Activated CD8-positive, alpha-beta T cell treated with anti-CD3 and anti-CD28 coated beads, Interleukin-2, amount 10 ng/mL, durations not matched to agents 7 days and 5 days (primary cell): ENCODE measurements at regions of chr7 and their contacts with region 1.

Region 1: GRCh38 chr7:116929914-116930913 is 23.1 kb upstream of the ST7 start:
- DNase-seq: peak; percentile 81
- ATAC-seq: peak; percentile 91
- H3K4me3 Mint-ChIP-seq: no peak overlapping the region
- H3K27ac Mint-ChIP-seq: no peak overlapping the region
- H3K4me1 Mint-ChIP-seq: peaks cover 7% of the 10 kb centered on the region
- H3K27me3 Mint-ChIP-seq: peaks cover 24% of the 10 kb centered on the region

Region 2: GRCh38 chr7:116786791-116787443 is 143.3 kb before region 1 on chr7:
- CTCF ChIA-PET with region 1: no interaction called
- POLR2A ChIA-PET with region 1: no interaction called
- DNase-seq: peak; percentile 21
- ATAC-seq: no peak
- H3K4me3 Mint-ChIP-seq: no peak overlapping the region
- H3K27ac Mint-ChIP-seq: no peak overlapping the region
- H3K4me1 Mint-ChIP-seq: no peaks in the 10 kb centered on the region
- H3K27me3 Mint-ChIP-seq: peaks cover 11% of the 10 kb centered on the region

Region 3: GRCh38 chr7:116918704-116919103 is 11.5 kb before region 1 on chr7:
- CTCF ChIA-PET with region 1: interaction called, 12 read pairs
- POLR2A ChIA-PET with region 1: no interaction called
- DNase-seq: no peak
- ATAC-seq: no peak
- H3K4me3 Mint-ChIP-seq: no peak overlapping the region
- H3K27ac Mint-ChIP-seq: no peak overlapping the region
- H3K4me1 Mint-ChIP-seq: no peaks in the 10 kb centered on the region
- H3K27me3 Mint-ChIP-seq: no peaks in the 10 kb centered on the region

Region 4: DNA sequence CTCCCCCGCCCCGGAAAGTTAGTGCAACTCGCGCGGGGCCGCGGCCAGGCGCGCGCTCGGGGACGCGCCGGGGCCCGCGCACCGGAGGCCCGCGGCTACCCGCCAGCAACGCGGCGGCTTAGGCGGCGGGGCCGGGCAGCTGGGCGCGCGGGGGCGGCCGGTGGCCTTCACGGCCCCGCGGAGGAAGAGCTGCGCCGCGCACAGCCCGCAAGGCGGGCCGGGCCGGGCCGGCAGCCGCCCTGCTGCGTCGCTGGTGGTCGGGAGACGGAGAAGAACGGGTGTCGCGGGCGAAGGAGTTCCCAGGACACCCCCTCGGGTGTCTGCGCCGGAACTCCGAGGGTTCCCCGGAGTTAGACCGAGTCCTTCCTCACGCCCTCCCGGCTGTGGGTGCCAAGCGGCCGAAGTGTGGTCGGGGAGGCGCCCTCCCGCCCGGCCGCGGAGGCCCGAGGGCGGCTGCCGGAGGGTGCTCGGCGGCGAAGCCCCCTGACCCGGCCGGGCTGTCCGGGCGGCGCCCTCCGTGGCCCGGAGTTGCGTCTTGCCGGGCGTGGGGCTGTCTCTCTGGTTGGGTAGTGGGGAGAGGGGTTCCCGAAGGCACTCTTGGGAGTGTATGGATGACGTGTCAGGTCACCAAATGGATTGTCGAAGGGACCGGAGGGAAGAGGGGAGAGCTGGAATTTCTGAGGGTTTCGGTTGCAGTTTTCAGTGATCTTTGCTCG is 23.7 kb after region 1 on chr7:
- CTCF ChIA-PET with region 1: no interaction called
- POLR2A ChIA-PET with region 1: no interaction called
- DNase-seq: peak; percentile 25
- ATAC-seq: peak; percentile 75
- H3K4me3 Mint-ChIP-seq: peak overlapping the region; percentile 88
- H3K27ac Mint-ChIP-seq: peak overlapping the region; percentile 90
- H3K4me1 Mint-ChIP-seq: peaks cover 26% of the 10 kb centered on the region
- H3K27me3 Mint-ChIP-seq: peaks cover 2% of the 10 kb centered on the region